GM12878 (cell line): ENCODE measurements at regions of chr3 and their contacts with region 1.

Region 1: GRCh38 chr3:64417816-64418215 is 192.6 kb upstream of the PRICKLE2 start:
- DNase-seq: peak; percentile 33
- ATAC-seq: peak; percentile 90
- H3K4me3 ChIP-seq: no peak overlapping the region
- H3K27ac ChIP-seq: no peak overlapping the region
- H3K4me1 ChIP-seq: 0 out of 2 replicates have a peak, but pooled peaks cover 5% of the 10 kb centered on the region
- H3K27me3 ChIP-seq: no peaks in the 10 kb centered on the region
- CTCF ChIP-seq: no peak
- EP300 ChIP-seq: 0 out of 4 replicates have a peak, but pooled peaks of 1 of the 2 experiments have one; percentile 23
- POLR2A ChIP-seq: no peak
- RAD21 ChIP-seq: no peak

Region 2: DNA sequence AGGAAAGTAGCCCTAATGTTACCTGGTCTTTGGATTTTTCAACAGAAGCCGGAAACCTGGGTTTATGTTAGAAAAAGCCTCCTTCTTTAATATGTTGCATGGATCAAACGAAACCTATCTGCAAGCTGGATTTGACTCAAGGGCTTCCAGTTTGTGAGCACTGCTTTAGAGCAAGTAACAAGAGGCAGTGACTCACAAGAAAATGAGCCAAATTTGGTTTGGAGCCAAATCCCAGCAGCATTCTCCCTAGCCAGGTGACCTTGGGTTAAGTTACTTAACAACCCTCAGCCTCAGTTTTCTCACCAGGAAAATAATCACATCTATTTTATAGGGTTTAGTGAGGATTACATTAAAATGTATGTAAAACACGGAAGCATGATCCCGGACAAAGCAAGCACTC is 22.7 kb after region 1 on chr3:
- CTCF ChIA-PET with region 1: interaction called, 9 read pairs
- POLR2A ChIA-PET with region 1: interaction called, 6 read pairs
- RAD21 ChIA-PET with region 1: interaction called, 7 read pairs
- SMC1A ChIA-PET with region 1: interaction called, 40 read pairs
- in situ Hi-C with region 1: no loop called
- intact Hi-C with region 1: no loop called
- DNase-seq: no peak
- ATAC-seq: no peak
- H3K4me3 ChIP-seq: no peak overlapping the region
- H3K27ac ChIP-seq: no peak overlapping the region
- H3K4me1 ChIP-seq: no peaks in the 10 kb centered on the region
- H3K27me3 ChIP-seq: peaks cover 3 to 4% of the 10 kb centered on the region in 2 experiments; a peak in 2 of 4 replicates
- CTCF ChIP-seq: no peak
- EP300 ChIP-seq: no peak
- POLR2A ChIP-seq: no peak
- RAD21 ChIP-seq: no peak

Region 3: DNA sequence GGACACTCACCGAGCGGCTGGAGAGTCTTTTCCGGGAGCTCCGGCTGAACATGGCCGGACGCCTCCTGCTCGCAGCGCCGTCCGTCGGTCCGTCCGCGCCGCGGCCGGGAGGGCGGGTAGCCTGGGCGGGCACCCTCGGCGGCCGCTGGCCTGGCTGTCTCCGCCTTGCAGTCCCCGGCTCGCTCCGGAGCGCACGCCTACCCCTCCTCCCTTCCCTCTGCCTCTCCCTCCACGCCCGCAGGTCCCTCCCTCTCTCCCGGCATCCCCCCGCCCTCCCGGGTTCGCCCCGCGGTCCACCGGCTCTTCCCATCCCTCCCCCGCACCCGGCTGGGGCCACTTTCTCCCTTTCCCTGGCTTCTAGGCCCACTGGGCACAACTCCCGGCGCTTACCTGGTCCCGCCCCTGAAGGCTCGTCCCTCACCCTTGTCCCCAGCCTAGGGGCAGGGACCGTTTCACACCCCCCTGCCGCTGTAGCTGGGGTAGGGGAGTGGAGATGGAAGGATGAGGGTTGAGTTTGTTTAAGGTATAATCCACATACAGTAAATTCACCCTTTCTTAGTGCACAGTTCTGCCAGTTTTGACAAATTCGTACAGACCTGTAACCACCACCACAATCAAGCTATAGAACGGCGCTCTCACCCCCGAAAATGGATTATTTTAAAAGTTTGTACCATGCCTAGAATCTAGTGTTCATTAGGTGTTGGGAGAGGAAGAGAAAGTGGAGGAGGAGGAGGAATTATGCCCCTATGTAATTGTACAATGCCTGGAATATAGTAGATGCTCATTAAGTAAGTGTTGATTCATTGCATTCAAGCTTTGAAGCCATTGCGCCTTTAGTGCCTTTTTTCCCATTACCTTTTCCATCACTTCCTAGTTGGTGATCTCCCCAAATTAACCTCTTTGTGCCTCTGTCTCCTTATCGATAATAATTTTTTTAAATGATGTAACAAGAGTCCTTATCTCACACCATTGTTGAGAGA is 27.8 kb after region 1 on chr3:
- CTCF ChIA-PET with region 1: interaction called, 5 read pairs
- POLR2A ChIA-PET with region 1: interaction called, 13 read pairs
- RAD21 ChIA-PET with region 1: interaction called, 29 read pairs
- SMC1A ChIA-PET with region 1: interaction called, 40 read pairs
- in situ Hi-C with region 1: no loop called
- intact Hi-C with region 1: no loop called
- DNase-seq: no peak
- ATAC-seq: peak; percentile 24; the same call in 1 of the 3 replicates
- H3K4me3 ChIP-seq: no peak overlapping the region
- H3K27ac ChIP-seq: no peak overlapping the region
- H3K4me1 ChIP-seq: peaks cover 2% of the 10 kb centered on the region
- H3K27me3 ChIP-seq: peaks cover 3 to 5% of the 10 kb centered on the region in 2 experiments; a peak in 2 of 4 replicates
- CTCF ChIP-seq: no peak
- EP300 ChIP-seq: no peak
- POLR2A ChIP-seq: no peak
- RAD21 ChIP-seq: no peak

Region 4: GRCh38 chr3:64454179-64454578 is 36.4 kb after region 1 on chr3:
- CTCF ChIA-PET with region 1: interaction called, 5 read pairs
- POLR2A ChIA-PET with region 1: interaction called, 13 read pairs
- RAD21 ChIA-PET with region 1: interaction called, 29 read pairs
- SMC1A ChIA-PET with region 1: interaction called, 37 read pairs
- in situ Hi-C with region 1: no loop called
- intact Hi-C with region 1: no loop called
- DNase-seq: no peak
- ATAC-seq: peak; percentile 23; the same call in 2 of the 3 replicates
- H3K4me3 ChIP-seq: no peak overlapping the region
- H3K27ac ChIP-seq: no peak overlapping the region
- H3K4me1 ChIP-seq: peaks cover 4% of the 10 kb centered on the region; the same call in 1 of the 2 replicates
- H3K27me3 ChIP-seq: no peaks in the 10 kb centered on the region
- CTCF ChIP-seq: no peak
- EP300 ChIP-seq: no peak
- POLR2A ChIP-seq: no peak
- RAD21 ChIP-seq: no peak